ENCODE measurements at regions of chrX and their contacts with region 1.

Region 1: DNA sequence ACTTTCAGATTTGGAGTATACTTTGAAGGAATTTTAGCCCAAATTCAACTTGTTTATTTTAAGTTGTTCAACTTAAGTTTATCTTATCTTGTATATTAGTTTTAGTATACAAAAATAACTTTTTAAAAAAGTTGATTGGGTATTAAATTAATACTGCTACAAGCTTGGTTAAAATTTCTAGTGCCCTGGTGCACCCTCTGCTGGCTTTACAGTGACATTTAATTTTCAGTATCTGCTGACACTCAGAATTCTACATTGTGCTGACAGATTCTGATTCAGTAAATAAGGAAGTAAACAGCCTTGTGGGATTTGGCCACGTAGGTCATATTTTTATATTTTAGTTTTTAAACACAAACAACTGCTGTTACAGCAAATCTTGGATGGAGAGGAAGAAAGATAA is 2.9 kb downstream of the EDA start:
- DNase-seq: no peak
- H3K4me3 ChIP-seq: no peak overlapping the region
- H3K27me3 ChIP-seq: peaks cover 6% of the 10 kb centered on the region
- CTCF ChIP-seq: peak; percentile 28; the same call in 1 of the 2 replicates

Region 2: GRCh38 chrX:69538321-69538876 is 80.4 kb before region 1 on chrX:
- CTCF ChIA-PET with region 1: interaction called, 19 read pairs
- POLR2A ChIA-PET with region 1: no interaction called
- DNase-seq: no peak
- H3K4me3 ChIP-seq: peak overlapping the region; percentile 32
- H3K27me3 ChIP-seq: no peaks in the 10 kb centered on the region
- CTCF ChIP-seq: peak; percentile 74

Measured in BJ (cell line).